Gastrocnemius medialis (tissue), 4 donors: ENCODE measurements at regions of chr3 and their contacts with region 1.

Region 1: DNA sequence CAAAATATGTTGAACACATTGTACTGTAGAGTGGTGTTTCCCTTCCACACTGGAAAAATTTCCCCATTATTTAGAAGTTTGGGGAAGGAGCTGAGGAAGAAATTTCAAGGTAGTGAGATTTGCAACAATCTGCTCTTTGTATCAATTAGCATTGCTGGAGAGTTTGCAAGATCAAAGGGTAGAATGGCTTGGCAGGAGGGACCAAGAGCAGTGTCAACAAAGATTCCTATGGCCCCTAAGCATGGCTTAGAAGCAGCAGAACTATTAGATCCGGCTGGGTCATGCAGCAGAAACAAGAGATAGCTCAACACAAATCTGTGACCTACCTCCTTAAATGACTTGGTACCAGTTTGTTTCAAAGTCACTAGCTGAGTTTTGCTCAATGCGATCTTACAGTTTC is 175.0 kb downstream of the C3orf38 start:
- DNase-seq: no peak
- ATAC-seq: no peak
- H3K4me3 ChIP-seq: no peak overlapping the region
- H3K27ac ChIP-seq: no peak overlapping the region
- H3K4me1 ChIP-seq: no peaks in the 10 kb centered on the region
- H3K27me3 ChIP-seq: no peaks in the 10 kb centered on the region
- CTCF ChIP-seq: no peak
- POLR2A ChIP-seq: no peak

Region 2: GRCh38 chr3:88336894-88337293 is 12.1 kb after region 1 on chr3:
- in situ Hi-C with region 1: no loop called
- intact Hi-C with region 1: loop called (anchors 1 kb)
- DNase-seq: no peak
- ATAC-seq: no peak
- H3K4me3 ChIP-seq: no peak overlapping the region
- H3K27ac ChIP-seq: no peak overlapping the region
- H3K4me1 ChIP-seq: no peaks in the 10 kb centered on the region
- H3K27me3 ChIP-seq: no peaks in the 10 kb centered on the region
- CTCF ChIP-seq: no peak
- POLR2A ChIP-seq: no peak